AG04450 (cell line): ENCODE measurements at regions of chr17 and their contacts with region 1.

Region 1: GRCh38 chr17:29807520-29808351 is 122.3 kb downstream of the SSH2 start:
- DNase-seq: peak; percentile 42
- H3K4me3 ChIP-seq: no peak overlapping the region
- H3K27ac ChIP-seq: peak overlapping the region; percentile 54
- H3K27me3 ChIP-seq: no peaks in the 10 kb centered on the region
- CTCF ChIP-seq: peak; percentile 74

Region 2: GRCh38 chr17:29645515-29646051 is 162.2 kb before region 1 on chr17:
- CTCF ChIA-PET with region 1: interaction called, 11 read pairs
- POLR2A ChIA-PET with region 1: no interaction called
- DNase-seq: peak; percentile 30
- H3K4me3 ChIP-seq: no peak overlapping the region
- H3K27ac ChIP-seq: peak overlapping the region; percentile 71
- H3K27me3 ChIP-seq: no peaks in the 10 kb centered on the region
- CTCF ChIP-seq: no peak

Region 3: GRCh38 chr17:29789196-29790170 is 18.3 kb before region 1 on chr17:
- CTCF ChIA-PET with region 1: interaction called, 20 read pairs
- POLR2A ChIA-PET with region 1: interaction called, 3 read pairs
- DNase-seq: no peak
- H3K4me3 ChIP-seq: no peak overlapping the region
- H3K27ac ChIP-seq: no peak overlapping the region
- H3K27me3 ChIP-seq: no peaks in the 10 kb centered on the region
- CTCF ChIP-seq: no peak

Region 4: DNA sequence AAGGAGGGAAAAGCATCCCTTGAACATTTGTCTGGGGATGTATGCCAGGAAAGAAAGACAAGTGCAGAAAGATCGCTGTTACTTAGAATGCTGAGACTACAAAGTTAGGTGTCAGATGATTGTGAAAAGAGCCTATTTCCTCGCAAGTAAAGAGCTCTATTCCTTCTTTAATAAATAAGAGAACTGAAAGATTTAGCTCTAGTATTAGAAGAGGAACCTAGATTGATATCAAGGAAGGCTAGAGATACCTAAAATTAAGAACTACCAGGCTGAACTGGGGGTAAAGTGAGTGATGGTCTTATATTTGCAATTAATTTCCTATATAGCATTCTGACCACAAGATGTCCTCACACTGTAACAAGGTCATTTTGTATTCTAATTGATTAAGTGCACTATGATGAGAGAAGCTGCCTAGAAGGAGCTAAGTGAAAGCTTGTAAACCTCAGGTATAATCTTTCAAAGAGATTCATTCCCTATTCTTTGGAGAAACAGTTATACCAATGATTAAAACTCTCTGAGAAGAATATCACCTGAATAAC is 60.0 kb after region 1 on chr17:
- CTCF ChIA-PET with region 1: interaction called, 12 read pairs
- POLR2A ChIA-PET with region 1: no interaction called
- DNase-seq: no peak
- H3K4me3 ChIP-seq: no peak overlapping the region
- H3K27ac ChIP-seq: no peak overlapping the region
- H3K27me3 ChIP-seq: no peaks in the 10 kb centered on the region
- CTCF ChIP-seq: peak; percentile 22; the same call in 1 of the 2 replicates

Region 5: DNA sequence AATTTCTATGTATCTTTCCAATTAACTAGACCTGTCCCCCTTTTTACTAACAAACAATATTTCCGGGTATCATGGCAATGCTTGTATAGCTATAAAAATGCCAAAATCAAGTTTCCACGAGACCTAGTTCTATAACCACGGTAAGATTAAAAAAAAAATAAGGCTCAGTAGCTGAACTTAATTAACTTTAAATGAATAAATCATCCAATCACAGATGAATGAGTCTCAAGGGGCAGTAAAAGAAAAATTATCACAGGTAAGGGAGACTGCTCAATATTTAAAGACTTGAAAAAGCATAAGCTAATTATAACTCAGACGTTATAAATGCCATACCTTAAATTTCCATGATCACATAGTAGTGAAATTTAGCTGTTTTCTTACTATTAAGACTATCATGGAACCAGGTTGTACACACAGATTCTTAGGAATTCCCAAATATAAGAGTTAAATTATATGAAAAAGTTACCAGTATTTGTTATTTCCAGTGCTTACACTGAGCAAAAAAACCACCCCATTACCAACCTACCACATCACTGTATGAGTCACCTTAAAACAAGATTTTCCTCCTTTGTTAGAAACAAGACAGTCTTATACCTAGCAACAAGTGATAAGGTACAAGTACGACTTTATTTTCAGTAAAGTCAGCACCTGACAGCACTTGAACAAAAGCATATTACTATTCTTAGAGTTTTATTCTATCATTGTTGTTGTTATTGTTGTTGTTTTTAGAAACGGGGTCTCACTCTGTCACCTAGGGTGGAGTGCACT is 101.7 kb after region 1 on chr17:
- CTCF ChIA-PET with region 1: interaction called, 11 read pairs
- POLR2A ChIA-PET with region 1: no interaction called
- DNase-seq: no peak
- H3K4me3 ChIP-seq: no peak overlapping the region
- H3K27ac ChIP-seq: no peak overlapping the region
- H3K27me3 ChIP-seq: no peaks in the 10 kb centered on the region
- CTCF ChIP-seq: no peak